Gastrocnemius medialis (tissue), 4 donors: ENCODE measurements at regions of chr2 and their contacts with region 1.

Region 1: GRCh38 chr2:45089554-45090261 is 80.5 kb upstream of the SIX2 start:
- DNase-seq: no peak
- ATAC-seq: no peak
- H3K4me3 ChIP-seq: no peak overlapping the region
- H3K27ac ChIP-seq: no peak overlapping the region
- H3K4me1 ChIP-seq: no peaks in the 10 kb centered on the region
- H3K27me3 ChIP-seq: no peaks in the 10 kb centered on the region
- CTCF ChIP-seq: no peak
- POLR2A ChIP-seq: no peak

Region 2: DNA sequence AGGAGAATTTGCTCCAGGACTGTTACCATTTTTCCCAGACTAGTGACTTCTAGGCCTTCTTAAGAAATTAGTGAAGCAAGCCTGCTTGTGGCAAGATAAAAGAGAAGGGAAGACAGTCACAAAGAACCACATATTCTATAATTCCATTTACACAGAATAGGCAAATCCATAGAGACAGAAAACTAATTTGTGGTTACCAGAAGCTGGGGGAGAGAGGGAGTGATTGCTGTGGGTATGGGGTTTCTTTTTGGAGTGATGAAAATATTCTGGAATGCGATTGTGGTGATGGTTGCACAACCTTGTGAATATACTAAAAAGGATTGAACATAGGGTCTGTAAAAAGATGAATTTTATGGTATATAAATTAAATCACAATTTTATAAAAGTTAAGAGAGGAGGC is 42.9 kb before region 1 on chr2:
- in situ Hi-C with region 1: no loop called
- intact Hi-C with region 1: loop called (anchors 10 kb)
- DNase-seq: no peak
- ATAC-seq: no peak
- H3K4me3 ChIP-seq: no peak overlapping the region
- H3K27ac ChIP-seq: no peak overlapping the region
- H3K4me1 ChIP-seq: no peaks in the 10 kb centered on the region
- H3K27me3 ChIP-seq: no peaks in the 10 kb centered on the region
- CTCF ChIP-seq: no peak
- POLR2A ChIP-seq: no peak

Region 3: DNA sequence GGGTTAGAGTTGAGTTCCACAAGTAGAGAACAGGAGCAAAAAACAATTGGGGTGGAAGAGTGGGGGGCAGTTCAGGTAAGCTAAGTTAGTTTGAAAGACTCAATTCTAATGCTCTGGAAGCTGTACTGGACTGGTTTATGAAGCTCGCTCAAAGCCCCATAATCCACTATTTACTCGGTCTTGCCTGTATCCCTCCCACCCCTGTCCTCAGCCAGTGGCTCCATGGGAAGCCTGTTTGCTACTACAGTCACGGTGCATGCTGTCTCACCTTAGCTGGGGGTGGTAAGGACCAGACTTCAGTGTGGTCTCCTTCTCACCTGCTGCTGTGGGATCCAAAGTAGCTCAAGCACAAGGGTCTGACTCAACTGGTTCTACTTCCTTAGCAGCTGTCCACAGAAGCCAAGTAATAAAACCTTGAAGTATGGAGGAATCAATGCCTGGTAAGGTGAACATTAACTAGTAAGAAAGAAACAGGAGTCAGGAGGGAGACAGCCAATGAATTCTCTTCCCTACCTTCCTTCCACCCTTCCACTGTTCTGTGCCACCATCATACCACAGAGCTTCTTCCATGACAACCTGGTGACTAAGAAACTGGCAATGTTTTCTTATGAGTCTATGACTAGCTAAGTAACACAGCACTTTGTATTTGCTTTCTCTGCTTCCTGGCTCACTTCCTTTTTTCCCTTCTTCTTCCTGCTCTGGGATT is 290.6 kb after region 1 on chr2:
- in situ Hi-C with region 1: no loop called
- intact Hi-C with region 1: no loop called
- DNase-seq: no peak
- ATAC-seq: no peak
- H3K4me3 ChIP-seq: no peak overlapping the region
- H3K27ac ChIP-seq: no peak overlapping the region
- H3K4me1 ChIP-seq: no peaks in the 10 kb centered on the region
- H3K27me3 ChIP-seq: no peaks in the 10 kb centered on the region
- CTCF ChIP-seq: no peak
- POLR2A ChIP-seq: no peak

Region 4: GRCh38 chr2:46389417-46389916 is 1299.8 kb after region 1 on chr2:
- in situ Hi-C with region 1: no loop called
- intact Hi-C with region 1: no loop called
- DNase-seq: no peak
- ATAC-seq: no peak
- H3K4me3 ChIP-seq: no peak overlapping the region
- H3K27ac ChIP-seq: peak overlapping the region; percentile 15 to 52 (median 38)
- H3K4me1 ChIP-seq: no peaks in the 10 kb centered on the region
- H3K27me3 ChIP-seq: no peaks in the 10 kb centered on the region
- CTCF ChIP-seq: no peak
- POLR2A ChIP-seq: no peak